Calu3 (cell line): ENCODE measurements at regions of chr6 and their contacts with region 1.

Region 1: DNA sequence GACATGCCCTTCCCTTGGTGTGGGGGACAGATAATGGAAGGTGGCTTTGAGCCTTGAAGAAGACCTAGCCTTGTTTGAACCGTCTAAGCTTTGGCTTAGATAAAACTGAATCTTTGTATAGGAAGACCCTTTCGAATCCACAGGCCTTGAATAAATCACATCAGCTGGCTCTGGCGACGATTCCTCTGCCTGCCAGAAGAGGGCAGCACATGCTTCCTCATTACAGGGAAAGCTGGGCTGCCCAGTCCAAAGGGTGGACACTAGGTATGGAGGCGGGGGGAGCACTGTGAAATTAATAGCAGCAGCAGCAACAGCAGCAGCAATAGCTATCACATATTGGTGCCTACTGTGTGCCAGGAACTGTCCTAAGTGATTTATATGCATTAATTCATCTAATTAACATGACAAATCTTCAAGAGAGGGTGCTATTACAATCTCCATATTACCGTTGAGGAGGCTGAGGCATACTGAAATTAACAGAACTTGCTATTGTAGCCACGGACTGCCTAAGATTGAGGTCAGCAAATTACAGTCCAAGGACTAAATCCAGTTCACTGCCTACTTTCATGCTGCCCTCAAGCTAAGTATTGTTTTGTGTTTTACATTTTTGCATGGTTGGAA is 85.1 kb downstream of the CLIC5 start:
- DNase-seq: peak; percentile 75
- H3K4me3 Mint-ChIP-seq: no peak overlapping the region
- H3K27ac Mint-ChIP-seq: no peak overlapping the region
- H3K4me1 Mint-ChIP-seq: no peaks in the 10 kb centered on the region
- H3K27me3 Mint-ChIP-seq: peaks cover 11% of the 10 kb centered on the region
- CTCF ChIP-seq: peak; percentile 88

Region 2: DNA sequence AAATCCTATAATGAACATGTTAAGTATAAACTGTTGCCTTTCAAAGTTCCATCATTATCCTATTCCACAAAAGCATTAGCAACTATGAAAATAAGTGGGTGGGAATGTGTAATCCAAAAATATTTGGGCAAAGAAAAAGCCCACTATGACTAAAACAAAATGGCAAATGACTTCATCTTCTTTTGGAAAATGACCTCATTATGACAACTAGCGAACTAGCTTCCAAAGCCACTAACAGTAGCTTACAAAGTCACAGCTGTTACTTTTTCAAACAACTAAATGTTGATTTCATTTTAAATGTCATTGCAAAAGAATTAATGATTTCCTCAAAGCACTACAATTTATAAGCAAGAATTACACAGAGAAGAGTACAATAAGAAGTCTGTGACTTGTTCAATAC is 652.2 kb before region 1 on chr6:
- CTCF ChIA-PET with region 1: no interaction called
- intact Hi-C with region 1: no loop called
- DNase-seq: no peak
- H3K4me3 Mint-ChIP-seq: no peak overlapping the region
- H3K27ac Mint-ChIP-seq: no peak overlapping the region
- H3K4me1 Mint-ChIP-seq: no peaks in the 10 kb centered on the region
- H3K27me3 Mint-ChIP-seq: no peaks in the 10 kb centered on the region
- CTCF ChIP-seq: no peak

Region 3: DNA sequence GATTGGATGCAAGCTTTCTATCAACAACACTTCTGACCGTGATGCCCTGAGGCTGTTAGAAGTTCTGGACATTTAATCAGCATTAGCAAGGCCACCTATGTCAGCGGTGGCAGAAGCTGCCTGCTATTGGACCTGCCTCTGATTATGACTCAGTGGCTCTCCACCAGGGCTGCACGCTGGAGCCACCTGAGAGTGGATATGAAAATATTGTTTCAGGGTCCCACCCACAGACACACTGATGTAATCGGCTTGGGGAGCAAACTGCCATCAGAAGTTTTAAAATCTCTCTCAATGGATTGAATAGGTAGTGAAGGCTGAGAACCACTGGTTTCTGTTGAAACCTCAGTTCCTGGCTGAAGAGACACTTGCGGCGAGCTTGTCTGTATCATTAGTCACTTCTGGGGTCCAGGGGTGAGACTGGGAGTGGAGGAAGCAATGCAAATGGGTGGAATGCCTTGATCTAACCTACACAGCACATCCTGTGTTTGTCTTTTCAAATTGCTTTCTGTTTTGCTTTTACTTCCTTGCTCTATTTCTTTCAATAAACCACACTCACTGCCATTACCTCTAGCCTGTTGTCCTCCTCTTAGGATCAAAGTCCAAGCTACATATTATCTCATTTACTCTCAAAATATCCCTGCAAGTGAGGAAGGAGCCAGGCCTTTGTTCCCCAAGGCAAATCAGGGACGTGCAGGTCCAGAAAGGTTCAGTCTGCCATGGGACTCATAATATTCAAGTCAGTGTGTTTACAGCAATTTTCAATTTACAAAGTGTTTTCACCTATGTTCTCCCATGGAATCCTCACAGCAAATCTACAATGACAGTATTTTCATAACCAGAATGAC is 80.9 kb after region 1 on chr6:
- CTCF ChIA-PET with region 1: no interaction called
- intact Hi-C with region 1: loop called (anchors 10 kb)
- DNase-seq: peak; percentile 49
- H3K4me3 Mint-ChIP-seq: peak overlapping the region; percentile 53
- H3K27ac Mint-ChIP-seq: peak overlapping the region; percentile 77
- H3K4me1 Mint-ChIP-seq: peaks cover 27% of the 10 kb centered on the region
- H3K27me3 Mint-ChIP-seq: peaks cover 19% of the 10 kb centered on the region
- CTCF ChIP-seq: no peak

Region 4: GRCh38 chr6:46203391-46204177 is 273.1 kb after region 1 on chr6:
- CTCF ChIA-PET with region 1: interaction called, 3 read pairs
- intact Hi-C with region 1: loop called (anchors 10 kb)
- DNase-seq: no peak
- H3K4me3 Mint-ChIP-seq: no peak overlapping the region
- H3K27ac Mint-ChIP-seq: no peak overlapping the region
- H3K4me1 Mint-ChIP-seq: no peaks in the 10 kb centered on the region
- H3K27me3 Mint-ChIP-seq: peaks cover 72% of the 10 kb centered on the region
- CTCF ChIP-seq: no peak

Region 5: DNA sequence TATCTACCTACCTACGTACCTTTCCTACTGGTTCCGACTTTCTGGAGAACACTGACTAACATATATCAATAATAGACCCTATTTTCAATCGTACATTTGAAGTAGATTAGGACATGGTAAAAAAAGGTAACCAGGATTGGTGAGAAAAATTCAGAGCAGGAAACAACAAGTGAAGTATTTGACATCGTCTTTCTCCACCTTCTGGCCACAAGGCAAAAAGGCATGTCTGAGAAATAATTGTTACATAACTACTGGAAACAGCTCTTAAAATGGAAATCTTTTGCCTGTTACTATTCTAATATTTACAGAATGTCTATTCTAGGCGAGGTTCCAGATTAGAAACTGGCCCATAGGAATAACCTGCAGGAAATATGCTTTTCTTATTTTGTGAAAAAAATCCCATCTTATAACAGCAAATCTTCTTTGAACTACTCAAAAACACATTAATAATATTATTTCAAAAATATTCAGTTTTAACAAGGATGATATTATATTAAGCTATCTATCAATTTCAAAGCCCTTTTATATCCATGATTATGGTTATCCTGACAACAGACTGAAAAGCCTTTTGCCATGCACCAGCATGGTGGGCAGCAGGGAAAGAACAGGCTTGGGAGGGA is 479.9 kb after region 1 on chr6:
- CTCF ChIA-PET with region 1: interaction called, 6 read pairs
- intact Hi-C with region 1: loop called (anchors 2 kb)
- DNase-seq: peak; percentile 34
- H3K4me3 Mint-ChIP-seq: no peak overlapping the region
- H3K27ac Mint-ChIP-seq: no peak overlapping the region
- H3K4me1 Mint-ChIP-seq: no peaks in the 10 kb centered on the region
- H3K27me3 Mint-ChIP-seq: no peaks in the 10 kb centered on the region
- CTCF ChIP-seq: peak; percentile 52